Keratinocyte (primary cell): ENCODE measurements at regions of chr2 and their contacts with region 1.

Region 1: GRCh38 chr2:176991411-176991810 is 221.2 kb upstream of the HNRNPA3 start:
- DNase-seq: no peak
- H3K4me3 ChIP-seq: no peak overlapping the region
- H3K27ac ChIP-seq: no peak overlapping the region
- H3K4me1 ChIP-seq: no peaks in the 10 kb centered on the region
- H3K27me3 ChIP-seq: no peaks in the 10 kb centered on the region
- CTCF ChIP-seq: no peak

Region 2: DNA sequence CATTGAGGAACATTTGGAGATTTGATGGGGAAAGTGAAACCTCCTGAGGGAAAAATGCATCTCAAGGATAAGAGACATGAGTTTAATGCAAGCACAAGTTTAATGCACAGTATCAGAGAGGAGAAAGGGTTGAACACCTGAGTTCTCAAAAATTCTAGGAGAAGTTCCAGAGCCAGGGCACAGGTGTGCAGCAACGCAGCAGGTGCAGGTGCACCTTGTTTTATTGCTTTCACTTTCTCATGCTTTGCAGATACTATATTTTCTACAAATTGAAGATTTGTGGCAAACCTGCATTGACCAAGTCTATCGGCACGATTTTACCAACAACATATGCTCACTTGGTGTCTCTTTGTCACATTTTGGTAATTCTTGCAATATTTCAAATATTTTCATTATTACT is 46.4 kb before region 1 on chr2:
- dilution Hi-C with region 1: loop called (anchors 5 kb)
- DNase-seq: no peak
- H3K4me3 ChIP-seq: no peak overlapping the region
- H3K27ac ChIP-seq: no peak overlapping the region
- H3K4me1 ChIP-seq: no peaks in the 10 kb centered on the region
- H3K27me3 ChIP-seq: no peaks in the 10 kb centered on the region
- CTCF ChIP-seq: no peak

Region 3: DNA sequence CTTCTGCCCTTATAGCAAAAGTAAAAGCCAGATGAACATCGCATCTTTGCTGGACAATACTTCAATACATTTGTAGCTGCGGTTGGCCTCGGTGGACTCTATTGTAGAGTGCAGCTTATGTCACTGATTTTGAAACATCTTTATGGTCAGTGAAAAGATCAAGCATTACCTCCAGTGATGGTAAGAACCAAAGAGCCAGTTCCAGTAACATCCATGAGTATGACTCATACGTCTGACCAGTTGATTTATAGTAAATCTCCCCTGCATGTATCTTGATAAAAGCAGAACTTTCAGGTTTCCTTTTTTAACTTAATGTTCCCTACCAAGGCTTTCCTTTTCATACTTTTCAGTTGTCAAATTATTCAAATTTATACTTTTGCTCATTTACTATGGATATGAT is 102.0 kb after region 1 on chr2:
- dilution Hi-C with region 1: no loop called
- DNase-seq: no peak
- H3K4me3 ChIP-seq: no peak overlapping the region
- H3K27ac ChIP-seq: no peak overlapping the region
- H3K4me1 ChIP-seq: no peaks in the 10 kb centered on the region
- H3K27me3 ChIP-seq: no peaks in the 10 kb centered on the region
- CTCF ChIP-seq: no peak